Activated CD4-positive, alpha-beta T cell treated with anti-CD3 and anti-CD28 coated beads, Interleukin-2, amount 10 ng/mL, durations not matched to agents 24 days and 14 days (primary cell): ENCODE measurements at regions of chr13 and their contacts with region 1.

Region 1: GRCh38 chr13:74246487-74246886 is 112.3 kb upstream of the KLF12 start:
- DNase-seq: no peak
- H3K4me3 Mint-ChIP-seq: no peak overlapping the region
- H3K27ac Mint-ChIP-seq: no peak overlapping the region
- H3K4me1 Mint-ChIP-seq: peaks cover 54% of the 10 kb centered on the region
- H3K27me3 Mint-ChIP-seq: peaks cover 1% of the 10 kb centered on the region

Region 2: DNA sequence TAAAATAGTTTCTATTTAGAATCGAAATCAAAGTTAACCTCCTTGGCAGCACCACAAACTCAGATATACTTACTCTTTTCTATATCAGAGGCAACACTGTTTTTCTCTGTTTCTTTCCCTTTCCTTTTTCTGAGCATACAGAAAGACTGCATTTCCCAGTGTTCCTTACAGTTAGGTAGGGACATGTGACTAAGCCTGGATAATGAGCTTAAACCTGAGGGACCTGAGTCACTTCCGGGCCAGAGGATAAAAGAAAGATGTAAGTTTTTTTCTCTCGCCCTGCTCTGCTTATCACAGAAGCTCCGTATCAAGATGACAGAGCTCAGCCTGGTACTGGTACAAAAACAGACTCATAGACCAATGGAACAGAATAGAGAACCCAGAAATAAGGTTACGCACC is 644.2 kb before region 1 on chr13:
- intact Hi-C with region 1: no loop called
- DNase-seq: no peak
- H3K4me3 Mint-ChIP-seq: no peak overlapping the region
- H3K27ac Mint-ChIP-seq: no peak overlapping the region
- H3K4me1 Mint-ChIP-seq: no peaks in the 10 kb centered on the region
- H3K27me3 Mint-ChIP-seq: no peaks in the 10 kb centered on the region

Region 3: GRCh38 chr13:73924607-73925006 is 321.9 kb before region 1 on chr13:
- intact Hi-C with region 1: loop called (anchors 5 kb)
- DNase-seq: no peak
- H3K4me3 Mint-ChIP-seq: no peak overlapping the region
- H3K27ac Mint-ChIP-seq: peak overlapping the region; percentile 77
- H3K4me1 Mint-ChIP-seq: peaks cover 23% of the 10 kb centered on the region
- H3K27me3 Mint-ChIP-seq: no peaks in the 10 kb centered on the region

Region 4: GRCh38 chr13:74230984-74231501 is 15.4 kb before region 1 on chr13:
- intact Hi-C with region 1: loop called (anchors 1 kb)
- DNase-seq: peak; percentile 61
- H3K4me3 Mint-ChIP-seq: peak overlapping the region; percentile 51
- H3K27ac Mint-ChIP-seq: peak overlapping the region; percentile 56
- H3K4me1 Mint-ChIP-seq: peaks cover 15% of the 10 kb centered on the region
- H3K27me3 Mint-ChIP-seq: no peaks in the 10 kb centered on the region